Caco-2 (cell line): ENCODE measurements at regions of chr5 and their contacts with region 1.

Region 1: DNA sequence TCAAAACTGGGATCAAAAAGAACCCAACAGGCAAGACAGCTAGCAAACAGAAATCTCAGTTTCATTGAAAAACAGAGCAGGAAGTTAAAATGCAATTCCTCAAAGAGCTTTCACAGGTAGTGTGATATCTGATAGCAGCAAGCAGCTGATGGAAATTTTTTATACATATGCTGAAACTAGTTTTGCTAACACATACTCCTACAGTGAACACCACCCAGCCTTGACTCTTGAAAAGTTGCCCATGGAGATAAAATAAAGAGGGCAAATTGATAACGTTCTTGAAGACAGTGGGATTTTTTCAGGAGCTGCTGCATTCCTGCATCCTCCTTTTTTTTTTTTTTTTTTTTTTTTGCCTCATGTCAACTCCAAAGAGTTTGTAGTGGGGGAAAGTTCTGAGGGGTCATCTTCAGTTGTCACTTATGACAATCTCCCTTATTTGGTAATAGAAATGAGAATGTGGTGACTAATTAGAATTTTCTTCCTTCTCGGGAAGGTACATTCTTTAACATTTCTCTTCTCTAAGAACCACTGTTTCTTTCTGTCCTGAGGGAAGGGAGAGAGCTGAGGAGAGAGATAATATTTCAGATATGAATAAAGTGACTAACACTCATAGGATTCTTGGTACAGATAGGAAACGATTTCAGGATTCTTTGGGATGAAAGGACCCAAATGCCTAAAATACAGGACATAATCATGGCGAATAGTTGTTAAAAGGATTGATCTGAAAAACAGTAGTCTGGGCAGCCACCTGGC is 24.6 kb downstream of the SH3RF2 start:
- DNase-seq: no peak
- H3K4me3 ChIP-seq: no peak overlapping the region
- H3K4me3 Mint-ChIP-seq: no peak overlapping the region
- H3K27ac Mint-ChIP-seq: peak overlapping the region; percentile 46
- H3K4me1 ChIP-seq: peaks cover 62% of the 10 kb centered on the region
- H3K4me1 Mint-ChIP-seq: peaks cover 43% of the 10 kb centered on the region
- H3K27me3 ChIP-seq: no peaks in the 10 kb centered on the region
- H3K27me3 Mint-ChIP-seq: no peaks in the 10 kb centered on the region
- CTCF ChIP-seq: no peak

Region 2: GRCh38 chr5:145908205-145908945 is 52.6 kb before region 1 on chr5:
- CTCF ChIA-PET with region 1: no interaction called
- POLR2A ChIA-PET with region 1: no interaction called
- intact Hi-C with region 1: no loop called
- DNase-seq: peak in 1 of 2 experiments; percentile 52
- H3K4me3 ChIP-seq: no peak overlapping the region
- H3K4me3 Mint-ChIP-seq: no peak overlapping the region
- H3K27ac Mint-ChIP-seq: peak overlapping the region; percentile 18
- H3K4me1 ChIP-seq: peaks cover 14% of the 10 kb centered on the region; the same call in 1 of the 2 replicates
- H3K4me1 Mint-ChIP-seq: peaks cover 29% of the 10 kb centered on the region
- H3K27me3 ChIP-seq: no peaks in the 10 kb centered on the region
- H3K27me3 Mint-ChIP-seq: no peaks in the 10 kb centered on the region
- CTCF ChIP-seq: peak; percentile 43 to 69

Region 3: DNA sequence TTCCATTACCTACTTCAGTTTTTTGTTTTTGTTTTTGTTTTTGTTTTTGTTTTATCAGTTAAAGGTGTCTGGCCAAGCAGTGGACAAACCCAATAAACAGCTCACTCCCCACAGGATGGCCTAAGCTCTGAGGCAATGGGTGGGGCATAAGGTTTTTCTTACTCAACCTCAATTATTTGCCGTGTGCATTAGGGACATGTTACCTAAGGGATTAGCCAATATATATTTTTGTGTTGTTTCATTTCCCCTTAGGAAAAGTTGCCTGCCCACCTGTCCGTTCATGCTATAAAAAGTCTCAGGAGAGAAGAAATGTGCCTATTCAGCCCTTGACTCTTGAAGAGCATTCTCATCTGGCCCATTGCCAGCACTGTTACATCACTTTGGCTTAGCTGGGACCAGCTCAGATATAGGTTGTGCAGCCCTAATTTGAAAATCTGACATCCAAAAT is 17.3 kb before region 1 on chr5:
- CTCF ChIA-PET with region 1: no interaction called
- POLR2A ChIA-PET with region 1: no interaction called
- intact Hi-C with region 1: loop called (anchors 2 kb)
- DNase-seq: no peak
- H3K4me3 ChIP-seq: no peak overlapping the region
- H3K4me3 Mint-ChIP-seq: no peak overlapping the region
- H3K27ac Mint-ChIP-seq: no peak overlapping the region
- H3K4me1 ChIP-seq: peaks cover 80% of the 10 kb centered on the region
- H3K4me1 Mint-ChIP-seq: peaks cover 67% of the 10 kb centered on the region
- H3K27me3 ChIP-seq: no peaks in the 10 kb centered on the region
- H3K27me3 Mint-ChIP-seq: no peaks in the 10 kb centered on the region
- CTCF ChIP-seq: no peak